Sigmoid colon (tissue), 7 donors: ENCODE measurements at regions of chr22 and their contacts with region 1.

Region 1: DNA sequence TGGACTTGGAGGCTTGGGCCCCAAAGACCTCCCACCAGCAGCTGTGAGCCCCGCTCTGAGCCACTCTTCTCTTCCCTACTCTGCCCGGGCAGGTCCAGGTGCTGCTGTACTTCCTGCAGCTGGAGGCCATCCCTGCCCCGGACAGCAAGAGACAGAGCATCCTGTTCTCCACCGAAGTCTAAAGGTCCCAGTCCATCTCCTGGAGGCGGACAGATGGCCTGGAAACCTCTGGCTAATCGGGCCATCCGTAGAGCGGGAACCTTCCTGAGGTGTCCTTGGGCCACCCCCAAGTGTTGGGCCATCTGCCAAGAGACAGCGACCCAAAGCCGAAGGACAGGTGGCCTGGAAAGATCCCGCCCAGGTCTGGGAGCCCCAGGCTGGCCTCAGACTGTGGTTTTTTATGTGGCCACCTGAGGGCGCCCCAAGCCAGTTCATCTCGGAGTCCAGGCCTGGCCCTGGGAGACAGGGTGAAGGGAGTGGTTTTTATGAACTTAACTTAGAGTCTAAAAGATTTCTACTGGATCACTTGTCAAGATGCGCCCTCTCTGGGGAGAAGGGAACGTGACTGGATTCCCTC is 135.1 kb downstream of the BCR start:
- DNase-seq: peak; percentile 87
- H3K4me3 ChIP-seq: no peak overlapping the region
- H3K27ac ChIP-seq: peak overlapping the region in 2 of 4 donors; percentile 29 to 48
- H3K4me1 ChIP-seq: no peaks in the 10 kb centered on the region
- H3K27me3 ChIP-seq: no peaks in the 10 kb centered on the region
- CTCF ChIP-seq: peak; percentile 49 to 59 (median 54)
- EP300 ChIP-seq: no peak
- POLR2A ChIP-seq: no peak

Region 2: GRCh38 chr22:22818861-22819855 is 496.3 kb before region 1 on chr22:
- intact Hi-C with region 1: no loop called
- DNase-seq: no peak
- H3K4me3 ChIP-seq: no peak overlapping the region
- H3K27ac ChIP-seq: no peak overlapping the region
- H3K4me1 ChIP-seq: peaks cover 0 to 13% (median 4%) of the 10 kb centered on the region in 4 donors
- H3K27me3 ChIP-seq: no peaks in the 10 kb centered on the region
- CTCF ChIP-seq: no peak
- EP300 ChIP-seq: no peak
- POLR2A ChIP-seq: no peak

Region 3: DNA sequence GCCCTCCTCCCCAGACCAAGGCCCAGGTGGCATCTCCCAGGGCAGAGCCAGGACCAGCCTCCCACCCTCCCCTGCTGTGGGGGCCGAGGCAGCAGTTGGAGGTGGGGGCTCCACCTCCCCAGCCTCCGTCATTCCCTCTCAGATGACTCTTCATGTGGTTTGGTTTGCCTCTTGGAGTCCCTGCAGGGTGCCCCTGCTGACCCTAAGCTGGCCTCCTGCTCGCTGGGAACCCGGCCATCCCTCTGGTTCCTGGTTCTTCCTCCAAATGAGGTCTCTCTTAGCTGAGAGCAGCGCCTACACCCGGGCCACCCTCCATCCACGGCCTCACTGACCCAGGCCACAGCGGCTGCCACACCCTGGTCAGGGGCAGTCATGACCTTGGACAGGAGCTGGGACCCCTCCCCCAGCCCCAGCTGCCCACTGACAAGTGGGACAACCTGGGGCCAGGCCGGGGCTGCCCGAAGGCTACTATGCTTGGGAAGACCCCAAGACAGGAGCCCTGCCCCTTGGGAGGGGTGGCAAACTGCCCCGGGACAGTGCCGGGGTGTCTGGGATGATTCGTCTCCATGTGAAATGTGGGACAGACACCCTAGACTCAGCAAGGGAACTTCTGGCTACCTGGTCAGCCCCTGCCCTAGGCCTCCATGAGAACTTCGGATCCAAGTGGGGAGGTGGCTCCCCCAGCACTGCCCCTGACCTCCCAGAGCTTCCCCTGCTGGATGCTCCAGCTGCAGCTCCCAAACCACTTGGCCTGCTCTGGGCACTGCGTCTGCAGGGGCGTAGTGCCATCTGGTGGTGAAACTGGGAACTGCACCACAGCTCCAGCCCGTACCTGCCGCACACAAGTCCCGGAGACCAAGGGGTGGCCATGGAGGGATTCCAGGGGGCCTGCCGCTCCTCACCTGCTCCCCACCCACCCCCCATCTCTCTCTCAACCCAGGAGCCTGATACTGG is 70.1 kb after region 1 on chr22:
- intact Hi-C with region 1: loop called (anchors 1 kb)
- DNase-seq: peak; percentile 87
- H3K4me3 ChIP-seq: no peak overlapping the region
- H3K27ac ChIP-seq: no peak overlapping the region
- H3K4me1 ChIP-seq: peaks cover 0 to 8% (median 0%) of the 10 kb centered on the region in 4 donors
- H3K27me3 ChIP-seq: peaks cover 0 to 5% (median 0%) of the 10 kb centered on the region in 3 donors
- CTCF ChIP-seq: peak; percentile 88 to 99 (median 98)
- EP300 ChIP-seq: no peak
- POLR2A ChIP-seq: no peak

Region 4: DNA sequence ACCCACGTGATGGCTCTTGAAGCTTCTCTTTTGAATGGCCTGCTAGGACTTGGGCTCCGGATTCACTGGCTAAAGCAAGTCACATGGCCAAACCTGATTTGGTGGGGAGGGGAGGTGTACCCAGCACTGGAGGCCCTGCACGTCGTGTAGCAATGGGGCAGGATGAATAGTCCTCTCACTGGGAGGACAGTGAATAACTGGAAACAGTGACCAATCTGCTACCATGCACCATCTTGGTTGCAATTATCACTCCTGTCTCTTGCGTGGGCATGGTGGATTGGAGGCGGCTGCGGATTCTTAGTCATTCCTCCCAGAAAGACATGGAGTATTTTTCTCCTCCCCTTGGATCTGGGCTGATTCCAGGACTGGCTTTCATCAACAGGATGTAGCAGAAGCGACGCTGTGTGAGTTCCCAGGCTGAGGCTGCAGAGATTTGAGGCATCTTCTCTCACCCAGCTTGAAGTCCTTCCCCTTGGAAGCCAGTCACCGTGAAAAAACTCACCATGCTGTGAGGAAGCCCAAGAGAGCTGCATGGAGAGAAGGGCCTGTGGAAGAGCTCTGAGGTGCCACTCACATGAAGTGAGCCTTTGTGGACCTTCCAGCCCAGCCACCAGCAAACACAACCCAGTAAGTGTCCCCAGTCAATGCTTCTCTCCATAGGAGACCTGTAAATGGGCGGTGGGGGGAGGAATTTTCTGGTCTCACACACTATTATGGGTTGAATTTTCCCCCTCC is 194.3 kb after region 1 on chr22:
- intact Hi-C with region 1: no loop called
- DNase-seq: no peak
- H3K4me3 ChIP-seq: no peak overlapping the region
- H3K27ac ChIP-seq: no peak overlapping the region
- H3K4me1 ChIP-seq: peaks cover 0 to 41% (median 11%) of the 10 kb centered on the region in 4 donors
- H3K27me3 ChIP-seq: no peaks in the 10 kb centered on the region
- CTCF ChIP-seq: no peak
- EP300 ChIP-seq: no peak
- POLR2A ChIP-seq: no peak

Region 5: DNA sequence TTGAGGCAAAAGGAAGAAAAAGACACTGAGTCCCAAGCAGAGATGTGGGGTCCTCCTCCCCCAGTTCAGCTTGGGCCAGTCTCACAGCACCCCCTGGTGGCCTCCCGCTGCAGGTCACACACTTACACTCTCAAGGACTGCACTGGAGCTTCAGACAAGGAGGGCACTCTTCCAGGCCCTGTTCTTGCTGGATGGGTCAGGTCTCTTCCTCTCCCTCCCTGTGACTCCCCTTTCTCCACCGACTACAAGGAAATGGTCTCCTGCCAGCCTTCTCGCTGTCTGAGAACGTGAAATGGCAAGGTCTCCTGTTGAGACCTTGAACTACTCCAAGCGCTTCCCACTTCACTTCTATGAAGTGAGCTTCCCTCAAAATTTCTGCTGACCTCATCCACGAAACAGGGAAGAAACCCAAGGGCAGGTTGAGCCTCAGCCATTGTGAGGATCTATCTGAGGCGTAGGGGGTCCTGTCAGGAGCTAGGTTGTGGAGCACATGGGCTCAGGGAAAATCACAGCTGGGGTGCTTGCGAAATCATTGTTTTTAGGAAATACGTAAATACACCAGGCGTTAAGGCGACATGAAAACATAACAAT is 275.9 kb after region 1 on chr22:
- intact Hi-C with region 1: loop called (anchors 2 kb)
- DNase-seq: peak; percentile 72
- H3K4me3 ChIP-seq: no peak overlapping the region
- H3K27ac ChIP-seq: no peak overlapping the region
- H3K4me1 ChIP-seq: no peaks in the 10 kb centered on the region
- H3K27me3 ChIP-seq: no peaks in the 10 kb centered on the region
- CTCF ChIP-seq: peak in 3 of 4 experiments; percentile 53 to 74 (median 63)
- EP300 ChIP-seq: no peak
- POLR2A ChIP-seq: no peak